ENCODE measurements at regions of chr12 and their contacts with region 1.

Region 1: DNA sequence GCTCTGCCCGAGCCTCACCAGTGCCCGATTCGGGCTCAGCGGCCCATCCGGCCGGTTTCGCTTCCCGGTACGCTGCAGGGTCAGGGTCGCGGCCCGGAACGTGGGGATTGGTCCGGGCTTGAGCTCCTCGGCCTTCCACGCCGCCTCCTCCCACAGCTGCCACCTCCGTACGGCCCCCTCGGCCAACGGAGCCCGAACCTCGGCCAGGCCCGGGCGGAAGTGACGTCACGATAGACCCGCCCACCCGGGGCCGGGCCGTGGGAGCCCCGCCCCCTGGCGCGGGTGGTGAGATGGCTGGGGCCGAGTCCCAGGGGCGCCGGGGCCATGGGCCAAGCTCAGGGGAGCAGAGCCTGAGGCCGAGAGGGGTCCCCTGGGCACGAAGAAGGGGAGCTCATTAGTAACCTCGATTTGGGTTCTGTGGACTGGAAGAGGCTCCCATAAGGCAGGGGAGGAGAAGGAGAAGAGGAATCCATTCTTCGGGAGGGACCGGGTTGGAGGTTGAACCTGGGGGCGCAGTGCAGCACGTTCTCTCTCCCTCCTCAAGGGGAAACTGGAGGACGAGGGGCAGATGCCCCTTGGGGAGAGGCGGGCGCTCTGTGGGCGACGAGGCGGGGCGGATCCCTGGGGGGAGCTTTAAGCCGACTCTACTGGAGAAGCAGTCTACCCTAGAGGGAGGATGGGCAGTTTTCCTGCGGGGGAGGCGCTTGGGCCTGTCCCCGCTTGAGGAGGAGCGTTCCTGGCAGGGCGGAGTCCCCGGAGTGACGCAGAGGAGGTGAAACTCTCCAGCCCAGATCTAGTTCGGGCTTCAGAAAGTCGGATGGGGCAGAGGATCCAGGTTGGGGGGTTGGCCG is at the start of gene MLF2:
- DNase-seq: peak; percentile 99
- H3K4me3 ChIP-seq: peak within 1 kb of the TSS; percentile 76
- H3K27ac ChIP-seq: peak within 1 kb of the TSS; percentile 96 to 100
- H3K4me1 ChIP-seq: peaks cover 7% of the 10 kb centered on the region
- H3K27me3 ChIP-seq: no peaks in the 10 kb centered on the region
- CTCF ChIP-seq: peak; percentile 13 to 98 (median 96)
- EP300 ChIP-seq: peak; percentile 66
- POLR2A ChIP-seq: peak; percentile 98
- total RNA-seq, gene MLF2: 64.1 to 162 (median 141) TPM

Region 2: GRCh38 chr12:6688999-6689882 is 63.9 kb before region 1 on chr12 and contains the start of gene ZNF384:
- intact Hi-C with region 1: no loop called
- DNase-seq: peak; percentile 96 to 98 (median 97)
- H3K4me3 ChIP-seq: peak within 1 kb of the TSS; percentile 69
- H3K27ac ChIP-seq: peak within 1 kb of the TSS; percentile 80 to 93
- H3K4me1 ChIP-seq: peaks cover 10% of the 10 kb centered on the region
- H3K27me3 ChIP-seq: no peaks in the 10 kb centered on the region
- CTCF ChIP-seq: peak in 2 of 3 donors; percentile 58
- EP300 ChIP-seq: peak; percentile 83
- POLR2A ChIP-seq: peak; percentile 56
- total RNA-seq, gene ZNF384: 22.1 to 64.9 (median 58.2) TPM

Region 3: GRCh38 chr12:6766651-6767349 is 13.7 kb after region 1 on chr12:
- intact Hi-C with region 1: loop called in 2 of 4 experiments (anchors 2 kb)
- DNase-seq: peak; percentile 78 to 88 (median 85)
- H3K4me3 ChIP-seq: peak overlapping the region; percentile 68
- H3K27ac ChIP-seq: peak overlapping the region; percentile 91 to 100
- H3K4me1 ChIP-seq: peaks cover 24% of the 10 kb centered on the region
- H3K27me3 ChIP-seq: no peaks in the 10 kb centered on the region
- CTCF ChIP-seq: peak; percentile 54 to 89 (median 81)
- EP300 ChIP-seq: no peak
- POLR2A ChIP-seq: peak; percentile 49

Region 4: DNA sequence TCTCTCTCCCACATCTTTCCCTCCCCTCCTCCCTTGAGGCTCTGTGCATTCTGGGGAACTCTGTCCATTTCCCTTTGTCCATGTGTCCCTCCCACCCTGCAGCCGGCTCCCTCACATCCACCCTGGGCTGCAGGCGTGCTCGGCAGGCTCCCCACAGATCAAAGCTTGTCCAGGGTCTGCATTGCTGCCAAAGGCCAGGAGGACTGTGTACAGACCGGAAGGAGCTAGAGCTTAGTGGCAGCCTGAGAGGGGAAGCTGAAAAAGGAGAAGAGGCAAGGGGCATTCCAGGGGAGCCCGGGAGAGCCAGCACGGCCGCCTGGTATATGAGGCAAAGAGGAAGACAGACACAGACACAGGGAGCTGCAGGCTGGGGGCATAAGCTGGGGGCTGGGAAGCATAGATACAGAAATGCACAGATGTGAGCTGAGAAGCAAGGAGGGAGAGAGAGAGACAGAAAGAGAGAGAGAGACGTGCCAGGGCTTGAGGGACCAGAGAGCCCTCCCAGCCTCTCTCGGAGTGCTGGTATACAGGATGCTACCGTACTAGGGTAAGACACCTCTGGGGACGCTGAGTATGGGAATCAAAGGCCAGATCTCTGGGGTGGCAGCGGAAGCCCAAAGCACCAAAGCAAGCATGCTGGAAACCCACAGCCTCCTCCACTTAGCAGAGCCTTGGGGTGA is 39.5 kb after region 1 on chr12:
- intact Hi-C with region 1: no loop called
- DNase-seq: no peak
- H3K4me3 ChIP-seq: no peak overlapping the region
- H3K27ac ChIP-seq: no peak overlapping the region
- H3K4me1 ChIP-seq: no peaks in the 10 kb centered on the region
- H3K27me3 ChIP-seq: no peaks in the 10 kb centered on the region
- CTCF ChIP-seq: no peak
- EP300 ChIP-seq: no peak
- POLR2A ChIP-seq: no peak

Region 5: DNA sequence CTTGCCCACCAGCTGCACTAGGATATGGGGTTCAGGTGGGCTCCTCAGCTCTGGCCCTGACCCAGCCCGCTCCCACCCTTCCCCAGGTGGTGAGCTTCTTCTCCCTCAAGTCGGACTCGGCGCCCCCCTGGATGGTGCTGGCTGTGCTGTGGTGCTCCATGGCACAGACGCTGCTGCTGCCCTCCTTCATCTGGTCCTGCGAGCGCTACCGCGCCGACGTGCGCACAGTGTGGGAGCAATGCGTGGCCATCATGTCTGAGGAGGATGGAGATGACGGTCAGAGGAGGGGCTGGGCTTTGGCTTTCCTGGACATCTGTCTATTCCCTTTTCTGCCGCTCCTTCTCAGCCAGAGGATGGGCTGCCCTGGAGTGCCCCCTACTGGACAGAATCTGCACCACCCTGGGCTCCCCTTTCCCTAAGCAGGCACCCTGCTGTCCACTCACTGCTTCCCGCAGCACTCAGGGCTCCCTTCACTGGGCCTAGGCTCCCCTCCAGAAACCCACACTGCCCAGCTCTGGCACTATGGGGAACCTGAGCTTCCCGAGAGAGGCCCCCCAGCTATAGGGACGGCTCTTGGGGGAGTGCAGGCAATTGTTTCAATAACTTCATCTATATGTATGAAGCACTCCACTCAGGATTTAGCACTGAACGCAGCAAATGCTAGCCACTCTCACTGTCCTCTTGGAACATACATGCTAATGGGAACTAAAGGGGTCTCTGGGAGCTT is 72.4 kb after region 1 on chr12:
- intact Hi-C with region 1: loop called in 2 of 4 experiments (anchors 5 kb)
- DNase-seq: peak; percentile 73 to 91 (median 90)
- H3K4me3 ChIP-seq: peak overlapping the region; percentile 22
- H3K27ac ChIP-seq: no peak overlapping the region
- H3K4me1 ChIP-seq: peaks cover 14% of the 10 kb centered on the region
- H3K27me3 ChIP-seq: no peaks in the 10 kb centered on the region
- CTCF ChIP-seq: peak; percentile 87 to 91 (median 89)
- EP300 ChIP-seq: no peak
- POLR2A ChIP-seq: no peak

Measured in ovary (tissue), 10 donors.